B cell (primary cell): ENCODE measurements at regions of chr4 and their contacts with region 1.

Region 1: DNA sequence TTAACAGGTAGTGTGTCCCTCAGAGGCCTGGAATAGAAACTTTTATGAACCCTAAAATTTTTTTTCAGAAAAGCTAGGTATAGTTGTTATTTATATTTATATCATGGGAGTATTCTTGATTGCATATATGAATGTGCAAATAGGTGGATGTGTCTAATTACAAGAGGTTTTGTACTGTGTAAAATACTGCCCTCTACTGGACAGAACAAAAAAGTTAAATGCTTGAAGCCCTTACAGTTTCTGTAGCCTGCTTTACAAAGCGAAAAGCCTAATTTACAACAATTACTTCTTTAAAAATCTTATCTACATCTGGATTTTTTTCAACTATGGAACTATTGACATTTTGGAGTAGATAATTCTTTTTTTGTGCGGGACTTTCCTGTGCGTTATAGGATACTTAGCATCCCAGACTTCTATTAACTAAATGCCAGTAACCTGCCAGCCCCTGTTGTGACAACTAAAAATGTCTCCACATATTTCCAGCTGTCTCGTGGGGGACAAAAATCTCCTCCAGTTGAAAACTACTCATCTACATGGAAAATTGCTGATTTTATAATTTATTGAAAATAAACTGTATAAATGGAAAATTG is 35.1 kb downstream of the ENPEP start:
- DNase-seq: peak; percentile 60
- ATAC-seq: peak; percentile 43
- H3K4me3 ChIP-seq: no peak overlapping the region
- H3K4me3 Mint-ChIP-seq: no peak overlapping the region
- H3K27ac ChIP-seq: no peak overlapping the region
- H3K27ac Mint-ChIP-seq: no peak overlapping the region
- H3K4me1 ChIP-seq: peaks cover 4 to 5% of the 10 kb centered on the region in 2 donors
- H3K4me1 Mint-ChIP-seq: peaks cover 5% of the 10 kb centered on the region
- H3K27me3 ChIP-seq: no peaks in the 10 kb centered on the region
- H3K27me3 Mint-ChIP-seq: peaks cover 6% of the 10 kb centered on the region
- CTCF ChIP-seq: peak; percentile 94

Region 2: GRCh38 chr4:109998867-109999584 is 512.0 kb before region 1 on chr4:
- CTCF ChIA-PET with region 1: interaction called, 270 read pairs
- POLR2A ChIA-PET with region 1: no interaction called
- intact Hi-C with region 1: loop called (anchors 1 kb)
- DNase-seq: peak; percentile 76
- ATAC-seq: peak; percentile 47
- H3K4me3 ChIP-seq: no peak overlapping the region
- H3K4me3 Mint-ChIP-seq: no peak overlapping the region
- H3K27ac ChIP-seq: no peak overlapping the region
- H3K27ac Mint-ChIP-seq: no peak overlapping the region
- H3K4me1 ChIP-seq: peaks cover 2 to 5% of the 10 kb centered on the region in 2 donors
- H3K4me1 Mint-ChIP-seq: peaks cover 11% of the 10 kb centered on the region
- H3K27me3 ChIP-seq: no peaks in the 10 kb centered on the region
- H3K27me3 Mint-ChIP-seq: peaks cover 10% of the 10 kb centered on the region
- CTCF ChIP-seq: peak; percentile 81

Region 3: DNA sequence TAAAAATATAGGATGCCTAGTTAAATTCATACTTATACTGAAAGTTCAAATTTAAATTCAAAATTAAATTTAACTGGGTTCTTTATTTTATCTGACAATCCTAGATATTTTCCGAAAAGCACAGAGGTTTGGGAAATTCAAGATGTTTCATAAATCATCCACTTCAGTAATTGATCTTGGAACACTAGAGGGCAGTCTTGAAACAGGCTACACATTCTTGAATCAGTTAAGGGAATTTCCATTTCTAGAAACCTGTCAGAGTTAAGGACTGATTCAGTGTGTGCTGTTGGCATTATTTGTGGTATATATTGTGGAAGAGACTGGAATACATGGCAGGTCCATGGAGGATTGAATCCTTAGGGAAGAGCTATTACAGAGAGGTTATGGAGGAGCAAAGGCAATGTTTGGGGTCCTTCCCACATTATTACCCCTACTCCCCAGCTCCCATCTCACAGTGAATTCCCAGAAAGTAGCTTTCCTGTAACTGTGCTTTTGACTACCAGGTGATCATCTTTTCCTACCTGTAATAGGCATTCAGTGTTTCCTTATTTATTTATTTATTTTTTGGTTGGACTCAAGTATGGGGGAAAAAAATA is 505.5 kb before region 1 on chr4:
- CTCF ChIA-PET with region 1: interaction called, 270 read pairs
- POLR2A ChIA-PET with region 1: no interaction called
- intact Hi-C with region 1: loop called (anchors 1 kb)
- DNase-seq: peak; percentile 63
- ATAC-seq: no peak
- H3K4me3 ChIP-seq: no peak overlapping the region
- H3K4me3 Mint-ChIP-seq: no peak overlapping the region
- H3K27ac ChIP-seq: no peak overlapping the region
- H3K27ac Mint-ChIP-seq: no peak overlapping the region
- H3K4me1 ChIP-seq: no peaks in the 10 kb centered on the region
- H3K4me1 Mint-ChIP-seq: no peaks in the 10 kb centered on the region
- H3K27me3 ChIP-seq: no peaks in the 10 kb centered on the region
- H3K27me3 Mint-ChIP-seq: peaks cover 9% of the 10 kb centered on the region
- CTCF ChIP-seq: peak; percentile 86